OCI-LY7 (cell line): ENCODE measurements at regions of chr1 and their contacts with region 1.

Region 1: DNA sequence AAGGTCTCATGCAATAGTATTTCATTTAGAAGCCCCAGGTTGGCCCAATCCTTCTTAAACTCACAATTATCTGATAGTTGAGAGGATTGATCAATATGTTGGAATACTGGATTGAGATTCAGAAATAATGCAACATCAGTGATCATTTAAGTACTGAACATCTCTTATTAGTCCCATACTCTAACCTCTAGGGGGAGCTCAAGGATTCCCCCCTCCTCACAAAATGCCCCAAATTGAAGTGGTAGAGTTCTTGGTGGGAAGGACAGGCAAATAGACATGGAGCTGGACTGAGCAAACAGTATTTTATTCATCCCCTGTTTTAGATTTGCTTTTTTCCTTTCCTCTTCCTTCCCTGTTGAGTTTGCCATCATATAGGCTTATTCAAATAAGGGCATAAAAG is 62.8 kb downstream of the NGF start:
- DNase-seq: peak; percentile 55
- H3K4me3 ChIP-seq: no peak overlapping the region
- H3K27ac ChIP-seq: no peak overlapping the region
- H3K4me1 ChIP-seq: no peaks in the 10 kb centered on the region
- CTCF ChIP-seq: peak; percentile 89

Region 2: DNA sequence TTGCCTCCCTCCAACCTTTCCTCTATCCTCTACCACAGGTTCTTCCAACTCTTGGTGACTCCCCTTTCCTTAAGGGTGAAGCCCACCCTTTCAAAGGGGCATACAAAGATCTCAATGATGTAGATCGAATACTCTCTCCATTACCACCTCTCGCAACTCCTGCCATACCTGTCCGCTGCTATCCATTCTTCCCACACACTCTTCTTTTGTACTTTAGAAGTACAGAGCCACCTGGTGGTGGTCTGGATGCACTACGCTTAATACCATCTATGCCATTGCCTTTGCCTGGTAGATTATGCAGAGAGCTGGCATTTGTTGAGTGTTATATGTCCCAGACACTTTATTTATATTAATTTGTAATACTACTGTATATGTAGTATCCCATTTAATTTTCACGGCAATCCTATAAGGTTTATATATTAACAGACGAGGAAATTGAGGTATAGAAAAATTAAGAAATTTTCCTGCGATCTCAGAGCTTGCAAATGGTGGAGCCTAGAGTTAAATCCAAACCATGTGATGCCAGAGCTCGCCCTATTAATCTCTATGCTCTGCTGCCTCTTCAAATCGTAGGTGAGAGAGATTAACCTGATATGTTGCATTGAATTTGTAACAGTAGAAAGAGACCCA is 222.6 kb before region 1 on chr1:
- CTCF ChIA-PET with region 1: no interaction called
- POLR2A ChIA-PET with region 1: no interaction called
- intact Hi-C with region 1: no loop called
- DNase-seq: peak; percentile 65
- H3K4me3 ChIP-seq: no peak overlapping the region
- H3K27ac ChIP-seq: no peak overlapping the region
- H3K4me1 ChIP-seq: no peaks in the 10 kb centered on the region
- CTCF ChIP-seq: peak; percentile 94

Region 3: GRCh38 chr1:115107516-115108260 is 167.5 kb before region 1 on chr1:
- CTCF ChIA-PET with region 1: no interaction called
- POLR2A ChIA-PET with region 1: no interaction called
- intact Hi-C with region 1: no loop called
- DNase-seq: no peak
- H3K4me3 ChIP-seq: no peak overlapping the region
- H3K27ac ChIP-seq: no peak overlapping the region
- H3K4me1 ChIP-seq: no peaks in the 10 kb centered on the region
- CTCF ChIP-seq: no peak

Region 4: GRCh38 chr1:115138968-115139367 is 136.2 kb before region 1 on chr1:
- CTCF ChIA-PET with region 1: no interaction called
- POLR2A ChIA-PET with region 1: no interaction called
- intact Hi-C with region 1: loop called (anchors 10 kb)
- DNase-seq: peak; percentile 71
- H3K4me3 ChIP-seq: no peak overlapping the region
- H3K27ac ChIP-seq: no peak overlapping the region
- H3K4me1 ChIP-seq: no peaks in the 10 kb centered on the region
- CTCF ChIP-seq: peak; percentile 92

Region 5: GRCh38 chr1:115351143-115351542 is 75.9 kb after region 1 on chr1:
- CTCF ChIA-PET with region 1: no interaction called
- POLR2A ChIA-PET with region 1: no interaction called
- intact Hi-C with region 1: loop called (anchors 5 kb)
- DNase-seq: peak; percentile 40
- H3K4me3 ChIP-seq: no peak overlapping the region
- H3K27ac ChIP-seq: no peak overlapping the region
- H3K4me1 ChIP-seq: peaks cover 34% of the 10 kb centered on the region
- CTCF ChIP-seq: no peak

Region 6: GRCh38 chr1:115469703-115470476 is 194.7 kb after region 1 on chr1:
- CTCF ChIA-PET with region 1: interaction called, 3 read pairs
- POLR2A ChIA-PET with region 1: no interaction called
- intact Hi-C with region 1: loop called (anchors 1 kb)
- DNase-seq: peak; percentile 58
- H3K4me3 ChIP-seq: no peak overlapping the region
- H3K27ac ChIP-seq: no peak overlapping the region
- H3K4me1 ChIP-seq: peaks cover 8% of the 10 kb centered on the region
- CTCF ChIP-seq: peak; percentile 97

Region 7: DNA sequence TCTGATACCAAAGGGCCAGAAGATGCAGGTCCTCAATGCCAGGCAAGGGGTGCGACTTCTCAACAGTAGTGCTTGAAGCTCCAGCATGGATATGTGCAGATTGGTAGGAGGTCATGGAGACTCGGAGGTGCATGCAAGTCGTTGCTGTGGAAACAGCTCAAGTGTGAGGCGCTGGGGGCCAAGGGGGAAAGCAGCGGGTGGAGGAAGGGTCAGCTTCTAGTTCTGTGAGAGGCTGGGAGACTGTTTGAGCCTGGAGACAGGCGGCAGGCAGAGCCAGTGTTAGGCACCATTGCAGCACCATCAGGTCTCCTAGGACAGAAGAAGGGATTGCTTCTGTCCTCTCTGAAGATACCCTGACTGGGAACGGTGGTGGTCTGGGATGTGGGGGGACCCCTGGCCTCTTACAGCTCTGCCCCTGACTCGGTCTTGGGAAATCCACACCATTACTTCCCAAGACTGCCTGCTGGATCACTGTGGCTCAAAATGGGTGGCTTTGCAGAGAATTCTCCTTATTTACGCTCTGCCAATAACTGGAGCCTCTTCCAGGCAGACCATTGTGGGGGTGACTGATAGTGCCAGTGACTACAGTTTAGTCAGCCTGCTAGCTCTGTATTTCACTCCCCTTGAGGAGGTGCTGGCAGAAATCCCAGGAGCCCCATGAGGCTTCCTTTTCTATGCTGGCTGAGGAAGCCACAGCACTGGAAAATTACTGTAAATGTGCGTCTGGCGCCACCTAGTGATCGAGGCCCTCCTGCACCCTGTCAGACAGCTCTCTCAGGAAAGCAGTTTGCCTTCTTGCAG is 320.3 kb after region 1 on chr1:
- CTCF ChIA-PET with region 1: no interaction called
- POLR2A ChIA-PET with region 1: no interaction called
- intact Hi-C with region 1: loop called (anchors 10 kb)
- DNase-seq: peak; percentile 59
- H3K4me3 ChIP-seq: no peak overlapping the region
- H3K27ac ChIP-seq: no peak overlapping the region
- H3K4me1 ChIP-seq: no peaks in the 10 kb centered on the region
- CTCF ChIP-seq: peak; percentile 90